ENCODE measurements at regions of chr12 and their contacts with region 1.

Region 1: GRCh38 chr12:64890873-64891468 is 66.5 kb downstream of the TBC1D30 start:
- DNase-seq: no peak
- H3K4me3 ChIP-seq: no peak overlapping the region
- H3K27ac ChIP-seq: no peak overlapping the region
- H3K4me1 ChIP-seq: no peaks in the 10 kb centered on the region
- H3K27me3 ChIP-seq: no peaks in the 10 kb centered on the region
- CTCF ChIP-seq: peak; percentile 84 to 93 (median 88)
- POLR2A ChIP-seq: no peak

Region 2: GRCh38 chr12:65106948-65107347 is 216.0 kb after region 1 on chr12:
- intact Hi-C with region 1: loop called in 1 of 2 experiments (anchors 5 kb)
- DNase-seq: no peak
- H3K4me3 ChIP-seq: no peak overlapping the region
- H3K27ac ChIP-seq: no peak overlapping the region
- H3K4me1 ChIP-seq: no peaks in the 10 kb centered on the region
- H3K27me3 ChIP-seq: no peaks in the 10 kb centered on the region
- CTCF ChIP-seq: peak in 5 of 6 experiments; percentile 30 to 47 (median 42)
- POLR2A ChIP-seq: no peak

Region 3: DNA sequence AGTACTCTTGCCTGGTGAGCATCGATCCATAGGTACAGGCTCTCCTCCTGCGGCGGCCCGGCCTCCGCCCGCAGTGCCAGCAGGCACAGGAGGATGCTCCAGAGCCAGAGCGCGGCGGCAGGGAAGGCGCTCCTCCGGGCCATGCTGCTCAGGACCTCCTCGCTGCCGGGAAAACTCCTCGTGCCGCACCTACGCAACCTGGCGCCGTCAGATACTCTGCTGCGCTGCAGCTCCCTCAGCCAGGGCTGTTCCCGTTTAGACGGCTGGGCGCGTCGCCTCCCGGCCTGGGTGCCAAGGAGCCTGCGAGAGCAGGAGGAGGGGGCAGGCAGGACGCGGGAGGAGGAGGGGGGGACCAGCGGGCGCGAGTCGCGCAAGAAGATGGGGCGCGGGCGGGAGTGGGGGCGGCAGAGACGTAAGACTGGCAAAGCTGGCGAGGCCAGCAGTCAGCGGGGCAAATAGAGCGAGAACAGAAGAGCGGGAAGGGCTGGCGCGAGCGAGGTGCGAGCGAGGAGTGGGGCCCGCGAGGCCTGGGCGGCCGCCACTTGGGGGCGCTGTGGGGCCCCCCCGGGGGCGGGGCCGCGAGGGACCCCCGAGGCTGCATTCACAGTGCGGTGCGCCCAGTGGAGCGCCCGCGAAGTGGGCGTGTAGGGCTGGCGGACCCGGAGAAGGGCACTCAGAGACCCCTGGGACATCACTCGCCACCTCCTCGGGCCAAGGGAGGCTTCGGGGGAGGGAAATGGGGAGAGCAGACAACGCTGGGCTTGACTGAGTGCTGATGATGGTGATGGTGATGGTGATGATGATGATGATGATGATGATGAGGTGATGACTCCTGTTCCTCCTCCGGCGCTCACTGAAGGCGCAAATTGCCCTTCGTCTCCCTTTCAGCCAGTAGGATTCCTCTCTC is 230.3 kb after region 1 on chr12 and contains the start of gene WIF1:
- intact Hi-C with region 1: loop called in 1 of 2 experiments (anchors 5 kb)
- DNase-seq: peak in 3 of 7 donors; percentile 5 to 41 (median 18)
- H3K4me3 ChIP-seq: peak within 1 kb of the TSS in 1 of 4 donors; percentile 48
- H3K27ac ChIP-seq: no peak within 1 kb of the TSS
- H3K4me1 ChIP-seq: peaks cover 0 to 8% of the 10 kb centered on the region in 2 donors
- H3K27me3 ChIP-seq: peaks cover 59% of the 10 kb centered on the region
- CTCF ChIP-seq: peak in 2 of 6 experiments; percentile 9 to 23
- POLR2A ChIP-seq: no peak
- total RNA-seq, gene WIF1: 0.12 to 3.8 (median 0.53) TPM in 7 of 9 donors, not detected in the others

Region 4: DNA sequence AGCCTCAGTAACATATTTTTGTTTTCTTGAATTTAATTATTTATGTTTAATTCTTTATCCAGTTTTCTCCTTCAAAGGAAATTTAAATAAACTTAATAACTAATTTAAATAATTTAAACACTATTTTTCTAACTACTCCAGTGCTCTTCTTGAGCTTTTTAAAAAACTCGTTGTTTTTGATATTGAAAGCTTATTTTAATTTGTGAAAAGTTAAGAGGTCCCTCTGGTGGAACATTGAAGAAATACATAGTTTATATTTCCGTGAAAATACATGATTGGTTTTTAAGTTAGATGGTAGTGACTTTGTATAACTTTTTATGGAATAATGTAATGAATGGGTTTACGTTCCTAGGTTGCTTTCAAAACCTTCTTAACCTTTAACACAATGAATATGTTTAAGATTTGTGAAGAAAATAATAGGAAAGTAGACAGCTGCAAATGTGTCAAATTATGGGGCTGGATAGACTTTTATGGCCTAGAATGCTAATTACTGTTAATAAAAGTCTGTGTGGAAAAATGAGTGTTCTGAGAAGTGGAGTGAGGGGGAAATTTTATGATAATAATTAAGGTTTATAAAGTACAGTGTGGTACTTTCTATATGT is 341.6 kb after region 1 on chr12:
- intact Hi-C with region 1: loop called (anchors 10 kb)
- DNase-seq: no peak
- H3K4me3 ChIP-seq: no peak overlapping the region
- H3K27ac ChIP-seq: no peak overlapping the region
- H3K4me1 ChIP-seq: peaks cover 0 to 12% of the 10 kb centered on the region in 2 donors
- H3K27me3 ChIP-seq: no peaks in the 10 kb centered on the region
- CTCF ChIP-seq: peak; percentile 28 to 68 (median 50)
- POLR2A ChIP-seq: no peak

Measured in adrenal gland (tissue), 19 donors.